ENCODE measurements at regions of chr12 and their contacts with region 1.

Region 1: GRCh38 chr12:52436000-52436827 is 2.0 kb upstream of the KRT75 start:
- DNase-seq: peak; percentile 77 to 95
- H3K4me3 ChIP-seq: no peak overlapping the region
- H3K27ac ChIP-seq: peak overlapping the region; percentile 86
- H3K4me1 ChIP-seq: peaks cover 65% of the 10 kb centered on the region
- H3K27me3 ChIP-seq: no peaks in the 10 kb centered on the region
- CTCF ChIP-seq: no peak

Region 2: GRCh38 chr12:52295663-52296062 is 140.6 kb before region 1 on chr12:
- CTCF ChIA-PET with region 1: no interaction called
- POLR2A ChIA-PET with region 1: interaction called, 10 read pairs
- intact Hi-C with region 1: no loop called
- DNase-seq: no peak
- H3K4me3 ChIP-seq: no peak overlapping the region
- H3K27ac ChIP-seq: no peak overlapping the region
- H3K4me1 ChIP-seq: 0 out of 2 replicates have a peak, but pooled peaks cover 4% of the 10 kb centered on the region
- H3K27me3 ChIP-seq: no peaks in the 10 kb centered on the region
- CTCF ChIP-seq: no peak

Region 3: GRCh38 chr12:53352331-53353256 is 916.4 kb after region 1 on chr12:
- CTCF ChIA-PET with region 1: no interaction called
- POLR2A ChIA-PET with region 1: no interaction called
- intact Hi-C with region 1: no loop called
- DNase-seq: peak; percentile 80
- H3K4me3 ChIP-seq: no peak overlapping the region
- H3K27ac ChIP-seq: peak overlapping the region; percentile 29
- H3K4me1 ChIP-seq: peaks cover 6% of the 10 kb centered on the region
- H3K27me3 ChIP-seq: no peaks in the 10 kb centered on the region
- CTCF ChIP-seq: peak; percentile 91

Measured in PC-9 (cell line).